ENCODE measurements at regions of chr5 and their contacts with region 1.

Region 1: DNA sequence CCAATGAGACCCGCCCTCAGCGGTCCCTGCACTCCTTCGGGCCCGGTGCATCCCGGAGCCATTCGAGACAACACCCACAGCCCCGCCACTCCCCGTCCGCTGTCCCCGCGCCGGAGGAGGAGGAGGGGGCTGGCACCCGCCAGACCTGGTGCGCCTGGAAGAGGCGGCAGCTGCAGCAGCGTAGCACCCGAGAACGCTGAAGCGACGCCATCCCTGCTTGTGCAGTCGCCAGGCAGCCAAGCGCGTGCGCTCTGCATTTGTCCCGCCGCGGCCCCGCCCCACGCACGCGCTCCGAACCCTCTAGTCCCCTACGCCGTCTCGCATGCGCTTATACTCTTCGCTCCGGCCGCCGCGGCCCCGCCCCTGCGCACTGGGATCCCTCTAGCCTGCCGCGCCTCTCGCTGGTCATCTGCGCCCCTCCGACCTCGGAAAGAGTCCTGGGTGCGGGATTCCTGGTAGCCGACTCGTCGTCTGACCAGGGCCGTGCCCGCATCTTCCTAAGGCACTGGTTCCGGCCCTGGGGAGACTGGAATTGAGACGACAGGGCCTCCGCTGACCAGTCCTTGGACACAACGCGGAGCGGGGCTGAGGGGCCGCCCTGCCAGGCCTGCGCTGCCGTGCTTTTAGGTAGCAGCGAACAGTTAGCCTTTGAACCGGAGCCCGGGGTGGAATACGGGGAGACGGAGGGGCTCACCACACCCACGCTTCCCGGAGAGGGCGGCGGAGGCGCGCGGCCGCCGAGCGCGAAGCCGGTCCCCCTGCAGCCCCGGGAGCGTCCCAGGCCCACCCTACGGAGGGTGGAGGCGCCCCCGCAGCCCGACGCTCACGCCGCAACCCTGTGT is at the start of gene MRNIP:
- DNase-seq: peak; percentile 87
- H3K4me3 Mint-ChIP-seq: peak within 1 kb of the TSS; percentile 96
- H3K27ac Mint-ChIP-seq: peak within 1 kb of the TSS; percentile 92
- H3K4me1 Mint-ChIP-seq: peaks cover 9% of the 10 kb centered on the region
- H3K27me3 Mint-ChIP-seq: no peaks in the 10 kb centered on the region
- total RNA-seq, gene MRNIP: 24.6 and 26.3 TPM in 2 replicates

Region 2: GRCh38 chr5:179559284-179560252 is 299.2 kb before region 1 on chr5:
- intact Hi-C with region 1: loop called (anchors 1 kb)
- DNase-seq: peak; percentile 93
- H3K4me3 Mint-ChIP-seq: peak overlapping the region; percentile 94
- H3K27ac Mint-ChIP-seq: peak overlapping the region; percentile 86
- H3K4me1 Mint-ChIP-seq: peaks cover 10% of the 10 kb centered on the region
- H3K27me3 Mint-ChIP-seq: no peaks in the 10 kb centered on the region

Region 3: DNA sequence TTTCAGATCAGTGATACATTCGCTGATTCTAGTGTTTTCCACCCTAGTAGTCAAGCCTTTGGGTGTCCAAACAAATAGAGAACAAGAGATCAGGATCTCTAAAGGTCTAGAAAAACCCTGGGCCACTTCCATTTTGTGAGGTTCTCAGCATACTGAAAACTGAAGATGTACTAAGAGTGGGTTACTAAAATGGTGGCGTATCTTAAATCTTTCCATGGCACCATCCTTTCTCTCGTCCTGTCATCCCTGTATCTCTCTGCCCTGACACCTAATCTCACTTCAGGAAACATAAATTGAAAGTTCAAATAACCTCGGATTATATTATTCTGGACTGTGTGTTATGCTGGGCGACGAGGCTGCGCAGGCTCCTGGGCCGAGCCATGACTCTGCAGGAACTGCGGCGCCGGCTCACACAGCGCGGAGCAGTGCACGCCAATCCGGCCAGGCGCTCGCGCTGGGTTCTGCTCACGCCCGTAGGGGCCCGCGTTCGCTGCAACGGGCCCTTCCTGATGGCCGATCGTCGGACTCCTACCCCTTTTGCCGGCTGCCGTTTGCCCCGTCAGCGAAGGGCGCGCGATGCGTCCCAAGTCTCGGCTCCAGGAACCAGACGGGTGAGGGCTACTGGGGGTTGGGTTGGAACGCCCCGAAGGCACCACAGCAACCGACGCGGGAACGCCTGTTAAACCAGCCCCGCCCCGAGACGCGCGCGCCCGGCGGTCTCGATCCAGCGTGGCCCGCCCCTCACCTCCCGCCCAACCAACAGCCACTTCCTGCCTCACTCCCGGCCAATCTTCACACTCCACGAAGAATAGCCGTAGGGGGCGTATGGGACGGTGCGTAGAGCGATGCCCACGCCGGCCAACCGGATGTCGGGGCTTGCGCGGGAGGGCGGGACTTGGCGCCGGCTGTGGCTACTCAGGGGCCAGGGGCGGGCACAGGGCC is 160.5 kb before region 1 on chr5:
- intact Hi-C with region 1: loop called (anchors 2 kb)
- DNase-seq: peak; percentile 99
- H3K4me3 Mint-ChIP-seq: peak overlapping the region; percentile 100
- H3K27ac Mint-ChIP-seq: peak overlapping the region; percentile 100
- H3K4me1 Mint-ChIP-seq: peaks cover 27% of the 10 kb centered on the region
- H3K27me3 Mint-ChIP-seq: no peaks in the 10 kb centered on the region

Region 4: GRCh38 chr5:179763215-179763945 is 95.4 kb before region 1 on chr5:
- intact Hi-C with region 1: loop called (anchors 1 kb)
- DNase-seq: peak; percentile 11
- H3K4me3 Mint-ChIP-seq: no peak overlapping the region
- H3K27ac Mint-ChIP-seq: no peak overlapping the region
- H3K4me1 Mint-ChIP-seq: peaks cover 51% of the 10 kb centered on the region
- H3K27me3 Mint-ChIP-seq: no peaks in the 10 kb centered on the region

Region 5: GRCh38 chr5:179821581-179822432 is 37.0 kb before region 1 on chr5:
- intact Hi-C with region 1: loop called (anchors 1 kb)
- DNase-seq: peak; percentile 83
- H3K4me3 Mint-ChIP-seq: peak overlapping the region; percentile 95
- H3K27ac Mint-ChIP-seq: peak overlapping the region; percentile 97
- H3K4me1 Mint-ChIP-seq: peaks cover 48% of the 10 kb centered on the region
- H3K27me3 Mint-ChIP-seq: no peaks in the 10 kb centered on the region

Region 6: DNA sequence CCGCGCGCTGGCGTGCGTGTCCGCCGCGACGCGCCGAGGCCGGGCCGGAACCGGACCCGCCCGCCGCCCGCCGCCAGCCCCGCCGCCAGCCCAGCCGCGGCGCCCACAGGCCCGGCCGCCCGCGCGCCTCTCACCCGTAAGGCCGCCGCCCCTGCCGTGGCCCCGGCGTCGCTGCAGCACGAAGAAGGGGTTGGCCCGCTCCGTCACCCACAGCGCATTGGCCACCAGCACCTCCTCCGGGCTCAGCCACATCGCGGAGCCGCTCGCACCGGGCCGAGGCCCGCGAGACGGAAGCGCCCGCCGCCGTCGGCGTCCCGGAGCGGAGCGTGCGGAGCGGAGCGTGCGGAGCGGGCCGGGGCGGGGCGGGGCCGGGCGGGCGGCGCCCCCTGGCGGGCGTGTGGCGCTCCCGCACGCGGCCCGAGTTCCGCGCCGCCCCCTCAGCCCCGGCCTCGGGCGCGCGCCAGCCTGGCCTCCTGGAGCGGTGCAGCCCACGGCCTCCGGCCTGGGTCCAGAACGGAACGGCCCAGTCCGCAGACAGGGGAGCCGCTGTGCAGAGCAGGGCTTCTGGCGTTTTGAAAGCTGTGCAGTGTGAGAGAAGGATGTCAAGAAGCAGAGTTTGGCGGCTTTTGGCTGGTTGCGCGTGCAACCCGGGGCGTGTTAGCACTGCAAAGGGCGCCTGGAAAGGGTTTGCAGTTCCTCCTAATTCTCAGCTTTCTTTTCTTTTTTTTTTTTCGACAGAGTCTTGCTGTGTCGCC is 48.9 kb after region 1 on chr5 and contains the start of gene TBC1D9B:
- intact Hi-C with region 1: loop called (anchors 1 kb)
- DNase-seq: peak; percentile 69
- H3K4me3 Mint-ChIP-seq: peak within 1 kb of the TSS; percentile 95
- H3K27ac Mint-ChIP-seq: peak within 1 kb of the TSS; percentile 89
- H3K4me1 Mint-ChIP-seq: peaks cover 18% of the 10 kb centered on the region
- H3K27me3 Mint-ChIP-seq: peaks cover 2% of the 10 kb centered on the region
- total RNA-seq, gene TBC1D9B: 123 and 127 TPM in 2 replicates

Region 7: GRCh38 chr5:179923436-179923835 is 64.6 kb after region 1 on chr5:
- intact Hi-C with region 1: no loop called
- DNase-seq: no peak
- H3K4me3 Mint-ChIP-seq: no peak overlapping the region
- H3K27ac Mint-ChIP-seq: no peak overlapping the region
- H3K4me1 Mint-ChIP-seq: no peaks in the 10 kb centered on the region
- H3K27me3 Mint-ChIP-seq: no peaks in the 10 kb centered on the region

Region 8: GRCh38 chr5:180494060-180494509 is 635.3 kb after region 1 on chr5 and contains the start of gene CNOT6:
- intact Hi-C with region 1: loop called (anchors 1 kb)
- DNase-seq: peak; percentile 94
- H3K4me3 Mint-ChIP-seq: peak within 1 kb of the TSS; percentile 90
- H3K27ac Mint-ChIP-seq: peak within 1 kb of the TSS; percentile 93
- H3K4me1 Mint-ChIP-seq: peaks cover 37% of the 10 kb centered on the region
- H3K27me3 Mint-ChIP-seq: no peaks in the 10 kb centered on the region
- total RNA-seq, gene CNOT6: 48.8 and 49.7 TPM in 2 replicates